ENCODE measurements at regions of chr12 and their contacts with region 1.

Region 1: GRCh38 chr12:109844983-109845823 is 12.0 kb upstream of the TRPV4 start:
- DNase-seq: peak; percentile 85 to 93
- H3K4me3 ChIP-seq: peak overlapping the region; percentile 37; the same call in 1 of the 2 replicates
- H3K27ac ChIP-seq: no peak overlapping the region
- H3K4me1 ChIP-seq: peaks cover 8% of the 10 kb centered on the region
- H3K27me3 ChIP-seq: no peaks in the 10 kb centered on the region
- CTCF ChIP-seq: peak; percentile 97

Region 2: DNA sequence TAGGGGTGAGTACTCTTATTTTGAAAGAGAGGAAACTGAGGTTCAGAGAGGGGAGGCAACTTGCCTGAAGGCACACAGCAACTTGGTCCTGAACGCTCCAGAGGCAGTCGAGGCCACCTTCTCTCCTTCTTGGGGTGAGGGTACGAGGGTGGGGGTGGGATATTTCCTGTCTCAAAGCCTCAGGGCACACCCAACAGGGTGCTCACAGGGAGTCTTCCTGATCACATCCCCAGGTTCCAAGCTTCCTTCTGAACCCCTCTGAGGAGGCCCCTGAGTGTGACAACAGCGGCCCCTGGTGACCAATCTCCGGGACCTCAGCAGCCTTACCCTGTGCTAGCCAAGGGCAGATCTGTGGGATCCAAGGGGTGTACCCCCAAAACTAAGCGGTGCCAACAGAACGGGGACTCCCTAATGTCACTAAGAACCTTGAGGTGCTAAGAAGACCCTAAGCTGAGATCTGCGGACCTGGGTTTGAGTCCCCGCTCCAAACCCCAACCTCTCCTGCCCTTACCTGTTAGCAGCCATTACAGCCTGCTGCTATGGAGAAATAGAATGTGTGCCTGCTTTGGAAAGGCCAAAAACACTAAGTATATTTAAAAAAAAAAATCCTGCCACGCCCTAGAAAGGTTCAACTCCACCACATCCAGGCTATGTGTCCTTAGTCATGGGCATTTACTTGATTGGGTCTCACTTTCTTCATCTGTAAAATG is 69.9 kb before region 1 on chr12:
- CTCF ChIA-PET with region 1: interaction called, 7 read pairs
- POLR2A ChIA-PET with region 1: interaction called, 5 read pairs
- intact Hi-C with region 1: loop called (anchors 1 kb)
- DNase-seq: peak; percentile 57 to 68
- H3K4me3 ChIP-seq: no peak overlapping the region
- H3K27ac ChIP-seq: no peak overlapping the region
- H3K4me1 ChIP-seq: peaks cover 26% of the 10 kb centered on the region
- H3K27me3 ChIP-seq: no peaks in the 10 kb centered on the region
- CTCF ChIP-seq: peak; percentile 91

Region 3: DNA sequence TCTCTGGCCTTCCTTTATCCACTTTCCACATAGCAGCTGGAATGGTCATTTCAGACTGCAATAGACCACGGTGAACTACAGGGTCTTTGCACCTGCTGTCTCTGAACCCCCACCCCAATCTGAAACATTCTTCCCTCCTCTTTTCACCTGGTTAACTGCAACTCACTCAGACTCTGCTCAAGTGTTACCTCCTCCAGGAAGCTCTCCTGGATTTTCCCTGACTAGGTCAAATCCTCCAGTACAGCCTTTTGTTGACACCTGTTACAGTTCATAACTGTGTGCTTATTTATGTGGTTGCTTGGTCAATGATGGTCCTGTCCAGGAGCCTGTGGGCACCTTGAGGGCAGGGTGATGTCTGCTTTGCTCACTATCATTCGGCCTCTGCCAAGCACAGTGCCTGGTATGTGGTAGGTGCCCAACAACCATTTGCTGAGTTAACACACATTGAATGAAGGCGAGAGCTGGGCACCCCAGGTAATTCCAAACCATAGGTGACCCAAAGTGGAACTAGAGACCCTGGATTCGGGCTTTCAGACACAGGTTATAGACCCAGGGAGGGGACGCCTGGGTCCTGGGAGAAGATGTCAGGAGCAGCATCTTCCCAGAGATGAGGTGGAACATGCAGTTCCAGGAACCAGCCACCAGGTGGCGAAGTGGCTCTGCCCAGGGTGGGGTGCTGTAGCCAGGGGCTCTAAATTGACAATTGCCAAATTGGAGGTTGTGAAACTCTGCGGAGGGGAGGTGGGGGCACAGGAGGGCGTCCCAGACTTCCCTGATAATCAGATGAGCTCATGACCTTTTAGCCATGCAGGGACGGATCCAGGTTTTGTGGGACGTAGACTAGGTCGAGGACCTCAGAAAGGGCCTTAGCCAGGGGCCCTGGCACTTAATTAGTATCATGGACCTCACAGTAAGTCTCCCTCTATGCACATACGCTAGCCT is 40.1 kb before region 1 on chr12:
- CTCF ChIA-PET with region 1: interaction called, 23 read pairs
- POLR2A ChIA-PET with region 1: no interaction called
- intact Hi-C with region 1: loop called (anchors 1 kb)
- DNase-seq: peak; percentile 48 to 59
- H3K4me3 ChIP-seq: no peak overlapping the region
- H3K27ac ChIP-seq: no peak overlapping the region
- H3K4me1 ChIP-seq: no peaks in the 10 kb centered on the region
- H3K27me3 ChIP-seq: no peaks in the 10 kb centered on the region
- CTCF ChIP-seq: peak; percentile 98

Region 4: GRCh38 chr12:109822951-109823411 is 22.2 kb before region 1 on chr12:
- CTCF ChIA-PET with region 1: interaction called, 3 read pairs
- POLR2A ChIA-PET with region 1: no interaction called
- intact Hi-C with region 1: loop called (anchors 2 kb)
- DNase-seq: peak; percentile 41 to 79
- H3K4me3 ChIP-seq: no peak overlapping the region
- H3K27ac ChIP-seq: no peak overlapping the region
- H3K4me1 ChIP-seq: peaks cover 26% of the 10 kb centered on the region
- H3K27me3 ChIP-seq: no peaks in the 10 kb centered on the region
- CTCF ChIP-seq: no peak

Region 5: GRCh38 chr12:110048242-110049027 is 203.2 kb after region 1 on chr12 and contains the start of gene C12orf76:
- CTCF ChIA-PET with region 1: no interaction called
- POLR2A ChIA-PET with region 1: interaction called, 16 read pairs
- intact Hi-C with region 1: no loop called
- DNase-seq: peak; percentile 90 to 91
- H3K4me3 ChIP-seq: peak within 1 kb of the TSS; percentile 86
- H3K27ac ChIP-seq: no peak within 1 kb of the TSS
- H3K4me1 ChIP-seq: peaks cover 15% of the 10 kb centered on the region
- H3K27me3 ChIP-seq: no peaks in the 10 kb centered on the region
- CTCF ChIP-seq: no peak
- total RNA-seq, gene C12orf76: 29.2 and 29.4 TPM in 2 replicates

Region 6: GRCh38 chr12:110141389-110141788 is 296.2 kb after region 1 on chr12:
- CTCF ChIA-PET with region 1: no interaction called
- POLR2A ChIA-PET with region 1: no interaction called
- intact Hi-C with region 1: no loop called
- DNase-seq: no peak
- H3K4me3 ChIP-seq: no peak overlapping the region
- H3K27ac ChIP-seq: no peak overlapping the region
- H3K4me1 ChIP-seq: no peaks in the 10 kb centered on the region
- H3K27me3 ChIP-seq: no peaks in the 10 kb centered on the region
- CTCF ChIP-seq: no peak

Measured in PC-9 (cell line).